HEK293 (cell line): ENCODE measurements at regions of chr15 and their contacts with region 1.

Region 1: DNA sequence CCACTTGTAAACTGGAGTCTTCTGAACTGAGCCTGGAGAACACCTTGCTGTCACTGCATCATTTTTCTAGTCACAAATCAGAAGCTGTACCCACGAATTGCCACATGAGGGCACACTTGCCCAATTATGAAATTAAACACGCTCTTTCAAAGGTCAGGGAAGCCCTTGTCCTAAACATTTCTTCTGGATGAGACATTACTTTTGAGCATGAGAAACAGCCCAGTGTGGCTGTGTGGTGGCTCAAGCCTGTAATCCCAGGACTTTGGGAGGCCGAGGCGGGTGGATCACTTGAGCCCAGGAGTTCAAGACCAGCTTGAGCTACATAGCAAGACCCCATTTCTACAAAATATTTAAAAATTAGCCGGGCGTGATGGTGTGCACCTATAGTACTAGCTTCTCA is 27.5 kb upstream of the CFAP161 start:
- H3K4me3 ChIP-seq: no peak overlapping the region
- H3K27ac ChIP-seq: no peak overlapping the region
- H3K4me1 ChIP-seq: no peaks in the 10 kb centered on the region
- CTCF ChIP-seq: peak; percentile 60

Region 2: GRCh38 chr15:80887148-80887547 is 219.4 kb before region 1 on chr15:
- CTCF ChIA-PET with region 1: no interaction called
- POLR2A ChIA-PET with region 1: no interaction called
- H3K4me3 ChIP-seq: no peak overlapping the region
- H3K27ac ChIP-seq: no peak overlapping the region
- H3K4me1 ChIP-seq: peaks cover 4% of the 10 kb centered on the region; the same call in 1 of the 2 replicates
- CTCF ChIP-seq: no peak

Region 3: GRCh38 chr15:80977627-80978036 is 128.9 kb before region 1 on chr15:
- CTCF ChIA-PET with region 1: interaction called, 16 read pairs
- POLR2A ChIA-PET with region 1: no interaction called
- H3K4me3 ChIP-seq: no peak overlapping the region
- H3K27ac ChIP-seq: no peak overlapping the region
- H3K4me1 ChIP-seq: peaks cover 14% of the 10 kb centered on the region
- CTCF ChIP-seq: peak; percentile 81

Region 4: DNA sequence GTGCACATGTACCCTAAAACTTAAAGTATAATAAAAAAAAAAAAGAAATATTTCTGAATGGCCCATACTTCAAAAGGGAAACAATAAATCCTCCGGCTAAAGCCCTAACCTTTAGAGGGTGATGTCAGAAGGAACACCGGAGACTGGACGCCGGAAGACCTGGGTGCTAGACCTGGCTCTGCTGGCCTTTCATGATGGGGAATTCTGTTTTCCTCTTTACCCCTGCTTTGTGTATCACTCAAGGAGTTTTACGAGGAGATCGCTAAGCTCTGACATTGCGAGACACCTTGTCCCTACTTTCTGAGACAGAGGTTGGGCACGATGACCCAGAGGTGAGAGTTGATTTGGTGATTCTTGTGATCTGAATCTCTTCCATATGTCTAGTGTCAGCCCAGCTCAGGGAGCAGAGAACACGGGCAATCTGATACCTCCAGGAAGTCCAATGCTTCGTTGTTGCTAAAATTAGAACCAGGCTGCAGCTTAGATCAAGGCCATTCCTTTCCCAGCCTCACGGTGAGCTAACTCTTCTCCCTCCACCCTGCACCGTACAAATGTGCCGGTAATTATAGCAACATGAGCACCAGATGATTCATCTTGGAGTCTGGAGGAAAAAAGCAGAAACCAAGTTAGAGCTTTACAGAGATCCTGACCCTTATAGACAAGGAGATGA is 14.5 kb before region 1 on chr15:
- CTCF ChIA-PET with region 1: interaction called, 12 read pairs
- POLR2A ChIA-PET with region 1: no interaction called
- H3K4me3 ChIP-seq: no peak overlapping the region
- H3K27ac ChIP-seq: peak overlapping the region; percentile 21; the same call in 1 of the 2 replicates
- H3K4me1 ChIP-seq: peaks cover 6% of the 10 kb centered on the region
- CTCF ChIP-seq: no peak

Region 5: GRCh38 chr15:81117136-81117535 is 10.6 kb after region 1 on chr15:
- CTCF ChIA-PET with region 1: interaction called, 15 read pairs
- POLR2A ChIA-PET with region 1: no interaction called
- H3K4me3 ChIP-seq: no peak overlapping the region
- H3K27ac ChIP-seq: no peak overlapping the region
- H3K4me1 ChIP-seq: peaks cover 13% of the 10 kb centered on the region
- CTCF ChIP-seq: no peak

Region 6: DNA sequence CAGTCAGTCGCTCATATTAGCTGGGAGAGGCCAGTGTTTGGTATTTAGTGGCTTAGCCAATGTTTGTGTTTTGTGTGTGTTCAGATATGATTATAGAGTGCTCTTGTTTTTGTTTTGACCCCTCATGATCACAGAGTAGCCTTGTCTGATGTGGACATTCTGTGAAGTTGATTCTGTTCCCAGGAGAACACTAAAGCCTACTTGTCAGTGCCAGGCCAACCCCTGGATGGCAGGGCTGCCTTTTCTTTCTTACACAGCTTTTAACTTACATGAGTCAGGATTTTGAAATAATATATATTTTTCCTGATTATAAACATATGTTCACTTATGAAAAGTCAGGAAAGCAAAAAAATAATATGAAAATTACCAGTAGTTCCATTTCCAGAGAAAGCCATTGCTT is 39.4 kb after region 1 on chr15:
- CTCF ChIA-PET with region 1: interaction called, 43 read pairs
- POLR2A ChIA-PET with region 1: no interaction called
- H3K4me3 ChIP-seq: no peak overlapping the region
- H3K27ac ChIP-seq: no peak overlapping the region
- H3K4me1 ChIP-seq: peaks cover 3% of the 10 kb centered on the region
- CTCF ChIP-seq: no peak

Region 7: GRCh38 chr15:81155375-81156218 is 49.0 kb after region 1 on chr15:
- CTCF ChIA-PET with region 1: interaction called, 43 read pairs
- POLR2A ChIA-PET with region 1: no interaction called
- H3K4me3 ChIP-seq: no peak overlapping the region
- H3K27ac ChIP-seq: no peak overlapping the region
- H3K4me1 ChIP-seq: no peaks in the 10 kb centered on the region
- CTCF ChIP-seq: peak; percentile 27; the same call in 1 of the 2 replicates

Region 8: GRCh38 chr15:81284256-81285031 is 177.9 kb after region 1 on chr15:
- CTCF ChIA-PET with region 1: no interaction called
- POLR2A ChIA-PET with region 1: no interaction called
- H3K4me3 ChIP-seq: no peak overlapping the region
- H3K27ac ChIP-seq: no peak overlapping the region
- H3K4me1 ChIP-seq: 0 out of 2 replicates have a peak, but pooled peaks cover 2% of the 10 kb centered on the region
- CTCF ChIP-seq: no peak